Posterior vena cava (tissue), 2 donors: ENCODE measurements at regions of chr3 and their contacts with region 1.

Region 1: DNA sequence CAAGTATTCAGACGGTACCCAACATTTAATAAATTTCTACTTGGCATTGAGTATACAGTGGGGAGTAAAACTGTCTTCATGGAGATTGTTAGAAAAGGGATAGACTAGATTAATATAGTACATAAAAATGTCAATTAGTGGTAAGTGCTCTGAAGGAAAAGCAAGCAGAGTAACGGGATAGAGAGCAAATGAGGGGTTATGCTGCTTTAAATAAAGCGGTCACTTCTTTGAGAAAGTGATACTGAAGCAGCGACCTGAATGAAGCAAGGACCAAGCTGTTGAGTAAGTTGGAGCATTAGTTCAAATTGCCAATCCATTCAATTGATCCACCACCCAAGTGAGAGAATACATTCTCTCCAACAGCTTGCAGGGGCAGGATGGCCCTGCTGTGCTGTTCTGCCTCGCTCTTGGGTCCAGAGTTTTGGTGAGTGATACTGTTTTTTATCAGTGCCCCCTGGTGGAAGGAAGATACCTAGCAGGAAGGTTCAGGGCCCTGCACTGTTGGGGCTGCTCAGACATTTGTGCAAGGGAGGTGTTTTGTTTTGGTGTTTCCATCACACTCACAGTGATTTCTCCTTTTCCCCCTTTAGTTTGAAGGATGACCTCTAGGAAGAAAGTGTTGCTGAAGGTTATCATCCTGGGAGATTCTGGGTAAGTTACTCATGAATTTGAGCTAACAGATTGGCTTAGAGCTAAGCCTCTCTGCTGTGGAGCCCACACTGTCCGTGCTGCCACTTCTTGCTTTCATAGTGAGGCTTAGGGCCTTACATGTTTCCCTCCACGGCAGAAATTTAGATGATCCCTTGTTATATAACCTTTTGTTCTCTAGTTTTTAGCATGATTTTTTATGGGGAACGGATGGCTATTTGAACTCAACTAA is 69.0 kb downstream of the RAB7A start:
- DNase-seq: no peak

Region 2: DNA sequence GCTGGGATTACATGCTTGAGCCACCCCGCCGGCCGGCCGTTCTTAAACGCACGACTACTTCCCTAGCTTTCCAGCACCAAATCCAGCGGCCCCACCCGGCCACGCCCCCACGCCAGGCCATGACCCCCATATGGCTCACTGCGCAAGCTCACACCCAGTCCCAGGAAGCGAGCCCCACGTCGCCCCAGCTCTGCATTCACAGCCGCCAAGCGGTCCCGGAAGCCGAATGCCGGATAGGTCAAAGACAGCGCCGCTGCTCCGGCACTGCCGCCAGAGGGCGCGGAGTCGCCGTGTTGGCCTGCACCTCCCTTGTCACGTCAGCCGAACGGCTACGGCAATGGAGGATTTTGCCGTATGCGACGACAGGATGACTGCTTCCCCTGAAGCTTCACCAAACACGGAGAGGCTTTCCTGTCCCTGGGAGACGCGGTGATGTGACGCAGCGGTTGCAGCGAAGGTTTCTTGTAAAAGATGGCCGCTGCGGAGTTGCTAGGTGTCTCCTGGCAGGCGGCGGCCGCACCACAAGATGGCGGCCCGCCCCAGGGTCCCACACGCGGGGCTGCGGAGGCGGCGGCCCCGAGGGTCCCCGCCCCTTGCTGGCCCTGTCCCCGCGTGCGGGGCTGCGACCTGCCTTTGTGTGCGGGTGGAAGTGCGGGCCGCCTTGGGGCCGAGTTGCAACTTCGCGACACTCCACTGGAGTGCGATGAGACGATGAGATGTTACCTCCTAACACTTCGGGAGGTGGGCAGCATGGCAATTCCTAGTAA is 114.2 kb before region 1 on chr3:
- intact Hi-C with region 1: loop called (anchors 10 kb)
- DNase-seq: peak; percentile 100

Region 3: DNA sequence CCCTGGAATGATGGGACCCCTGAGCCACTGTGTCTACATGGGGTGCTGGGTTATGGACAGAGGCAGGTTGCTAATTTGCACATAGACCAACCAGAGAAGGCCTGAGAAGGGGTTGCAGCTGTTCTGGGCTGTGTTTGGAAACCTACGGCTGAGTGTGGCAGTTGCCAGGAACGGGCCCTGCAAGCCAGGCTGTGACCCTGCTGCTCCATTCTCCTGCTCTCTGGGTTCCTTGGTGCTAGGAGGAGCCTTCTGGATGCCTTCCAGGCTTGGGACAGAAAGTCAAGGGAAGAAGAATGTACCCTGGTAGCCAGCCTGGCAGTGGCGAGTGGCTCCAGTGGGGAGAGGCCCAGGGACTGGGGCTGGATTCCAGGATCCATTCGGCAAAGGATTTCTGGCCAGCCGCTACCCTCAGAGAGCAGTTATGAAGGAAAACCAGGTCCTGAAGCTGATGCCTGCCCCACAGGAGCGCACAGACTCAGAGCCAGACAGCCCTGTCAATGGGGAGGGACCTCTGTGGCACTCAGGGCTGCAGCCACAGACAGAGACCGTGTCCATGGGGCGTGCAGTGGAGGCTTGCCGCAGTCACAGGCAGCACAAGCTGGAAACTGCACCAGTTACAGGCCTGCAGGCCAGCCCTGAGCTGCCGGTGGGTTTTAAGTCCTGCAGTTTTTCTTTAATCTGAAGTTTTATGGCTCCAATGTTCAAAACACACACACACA is 29.3 kb after region 1 on chr3:
- intact Hi-C with region 1: loop called in 1 of 2 experiments (anchors 1 kb)
- DNase-seq: no peak